GM10248 (cell line): ENCODE measurements at regions of chr20 and their contacts with region 1.

Region 1: DNA sequence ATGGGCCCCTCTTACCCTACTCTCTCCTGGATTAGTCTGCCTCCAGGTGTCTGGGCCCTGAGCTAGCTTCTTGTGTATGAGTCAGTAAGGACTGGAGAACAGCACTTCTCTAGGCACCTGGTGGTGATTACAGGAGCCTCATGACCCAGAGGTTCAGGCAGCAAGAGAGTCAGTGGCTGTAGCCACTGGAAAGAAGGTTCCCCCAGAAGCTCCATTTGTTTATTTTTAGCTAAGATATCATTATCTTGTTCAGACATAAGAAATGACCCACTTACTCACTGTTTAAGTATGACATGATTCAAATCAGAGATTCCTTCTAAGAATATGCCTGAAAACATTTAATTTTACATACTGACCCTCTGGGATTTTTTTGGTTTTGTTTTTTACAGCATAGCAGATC is 23.6 kb upstream of the SLC4A11 start:
- DNase-seq: no peak
- CTCF ChIP-seq: no peak

Region 2: GRCh38 chr20:2914160-2914559 is 348.4 kb before region 1 on chr20:
- CTCF ChIA-PET with region 1: no interaction called
- POLR2A ChIA-PET with region 1: no interaction called
- DNase-seq: no peak
- CTCF ChIP-seq: peak; percentile 37

Region 3: DNA sequence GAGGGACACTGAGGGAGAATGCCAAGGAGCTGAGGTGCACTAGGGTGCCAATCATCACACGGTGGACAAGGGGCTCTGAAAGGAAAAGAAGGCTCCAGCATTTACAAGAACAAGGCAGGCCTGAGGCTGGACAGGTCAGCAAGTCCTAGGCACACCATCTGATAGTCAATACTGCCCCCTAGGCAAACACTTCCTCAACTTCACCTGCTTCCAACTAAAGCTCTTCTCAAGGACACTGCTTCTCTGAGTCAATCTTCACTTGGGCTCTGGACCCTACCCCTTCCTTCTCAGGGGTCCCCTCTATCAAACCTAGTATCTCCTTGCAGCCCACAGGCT is 14.1 kb after region 1 on chr20:
- CTCF ChIA-PET with region 1: interaction called, 16 read pairs
- POLR2A ChIA-PET with region 1: no interaction called
- DNase-seq: peak; percentile 42
- CTCF ChIP-seq: peak; percentile 34